ENCODE measurements at regions of chr4 and their contacts with region 1.

Region 1: GRCh38 chr4:108834835-108835384 is 72.1 kb upstream of the ETNPPL start:
- DNase-seq: no peak
- H3K4me3 ChIP-seq: no peak overlapping the region
- H3K27ac ChIP-seq: no peak overlapping the region
- H3K4me1 ChIP-seq: no peaks in the 10 kb centered on the region
- H3K27me3 ChIP-seq: no peaks in the 10 kb centered on the region
- CTCF ChIP-seq: peak; percentile 49

Region 2: DNA sequence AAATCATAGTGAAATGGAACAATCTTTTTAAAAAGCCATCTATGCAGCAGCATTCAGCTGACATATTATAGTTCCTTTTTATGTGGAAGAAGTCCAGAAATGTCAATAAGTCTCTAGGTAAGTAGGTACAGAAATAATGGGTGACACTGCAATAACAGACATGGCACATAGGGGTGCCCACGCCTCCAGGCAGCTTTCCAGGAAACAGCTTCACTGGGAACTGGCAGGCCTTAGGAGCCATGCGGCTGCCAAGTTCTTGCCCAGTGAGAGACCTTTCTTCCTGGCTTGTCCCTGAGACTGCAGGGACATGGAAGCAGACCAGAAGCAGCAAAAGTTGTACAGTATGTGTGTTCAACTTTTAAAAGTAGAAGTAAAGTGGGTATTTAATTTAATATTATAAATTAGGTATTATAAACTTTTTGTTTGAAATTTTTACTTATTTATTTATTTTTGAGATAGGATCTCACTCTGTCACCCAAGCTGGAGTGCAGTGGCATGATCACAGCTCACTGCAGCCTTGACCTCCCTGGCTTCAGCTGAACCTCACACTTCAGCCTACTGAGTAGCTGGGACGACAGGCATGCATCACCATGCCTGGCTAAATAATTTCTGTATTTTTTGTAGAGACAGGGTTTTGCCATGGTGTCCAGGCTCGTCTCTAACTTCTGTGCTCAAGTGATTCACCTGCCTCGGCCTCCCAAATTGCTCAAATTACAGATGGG is 59.9 kb before region 1 on chr4:
- intact Hi-C with region 1: no loop called
- DNase-seq: no peak
- H3K4me3 ChIP-seq: no peak overlapping the region
- H3K27ac ChIP-seq: no peak overlapping the region
- H3K4me1 ChIP-seq: no peaks in the 10 kb centered on the region
- H3K27me3 ChIP-seq: no peaks in the 10 kb centered on the region
- CTCF ChIP-seq: no peak

Region 3: DNA sequence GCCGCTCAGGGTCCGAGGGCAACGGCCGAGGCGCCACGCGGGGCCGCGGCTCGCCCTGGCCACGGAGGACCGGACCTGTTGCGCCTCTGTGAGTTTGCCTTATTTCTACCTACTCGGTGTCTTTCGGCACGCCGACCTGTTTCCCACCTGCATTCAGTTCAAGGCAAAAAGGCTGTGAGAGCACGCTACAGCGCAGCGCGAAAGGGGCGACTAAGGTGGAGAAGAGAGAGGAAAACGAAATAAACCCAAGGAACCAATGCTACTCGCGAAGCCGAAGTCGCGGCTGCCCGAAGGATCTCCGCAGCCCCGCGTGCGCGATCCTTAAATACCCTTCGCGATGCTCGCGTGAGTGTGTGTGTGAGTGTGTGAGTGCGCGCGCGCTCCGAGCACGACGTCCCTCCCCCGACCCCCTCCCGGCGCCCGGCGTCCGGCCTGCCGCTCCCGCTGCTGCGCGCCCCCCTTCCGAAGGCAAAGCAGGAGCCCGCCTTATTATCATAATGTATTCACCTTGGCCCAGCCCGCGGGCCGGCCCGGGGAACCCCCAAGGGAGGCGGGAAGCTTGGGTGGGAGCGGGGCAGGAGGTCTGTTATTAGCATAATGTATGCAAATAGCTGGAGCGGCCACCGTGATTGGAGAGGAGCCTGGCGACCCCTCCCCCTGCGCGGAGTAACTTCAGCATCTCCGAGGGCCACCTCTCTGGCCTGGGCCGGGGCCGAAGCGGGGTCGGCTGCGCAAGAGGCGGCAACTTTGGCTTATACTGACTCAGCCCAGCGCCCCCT is 467.6 kb after region 1 on chr4 and contains the start of gene COL25A1:
- intact Hi-C with region 1: loop called (anchors 10 kb)
- DNase-seq: peak; percentile 31
- H3K4me3 ChIP-seq: peak within 1 kb of the TSS; percentile 37
- H3K27ac ChIP-seq: no peak within 1 kb of the TSS
- H3K4me1 ChIP-seq: peaks cover 11% of the 10 kb centered on the region
- H3K27me3 ChIP-seq: peaks cover 32% of the 10 kb centered on the region
- CTCF ChIP-seq: no peak
- total RNA-seq, gene COL25A1: 0.29 TPM in 1 of 2 donors, not detected in the other

Region 4: DNA sequence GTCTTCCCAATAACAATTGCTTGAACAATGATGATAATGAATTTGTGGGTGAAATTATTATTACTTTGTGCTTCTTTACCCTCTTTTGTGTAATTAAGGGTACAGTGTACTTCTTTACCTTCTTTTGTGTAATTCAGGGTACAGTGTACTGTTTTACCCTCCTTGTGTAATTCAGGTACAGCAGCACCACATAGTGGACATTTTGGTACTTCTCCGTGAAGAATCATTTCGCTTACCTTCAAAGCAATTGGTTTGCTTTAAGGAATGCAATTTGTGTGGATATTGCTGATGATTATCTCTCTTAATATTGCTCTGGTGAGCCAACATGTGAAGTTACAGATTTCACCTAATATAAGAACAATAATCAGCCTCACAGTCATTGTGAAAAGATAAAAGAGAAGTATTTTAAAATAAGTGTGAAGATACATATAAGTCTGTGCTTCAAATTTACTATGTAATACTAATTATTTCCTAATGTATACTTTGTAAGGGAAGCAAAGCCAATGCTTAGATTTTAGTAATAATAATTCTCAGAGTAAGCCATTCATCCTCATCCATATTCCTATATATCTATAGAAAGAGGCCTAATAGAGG is 571.5 kb after region 1 on chr4:
- intact Hi-C with region 1: loop called (anchors 5 kb)
- DNase-seq: peak; percentile 27
- H3K4me3 ChIP-seq: no peak overlapping the region
- H3K27ac ChIP-seq: no peak overlapping the region
- H3K4me1 ChIP-seq: no peaks in the 10 kb centered on the region
- H3K27me3 ChIP-seq: no peaks in the 10 kb centered on the region
- CTCF ChIP-seq: peak; percentile 38

Measured in colonic mucosa (tissue), 4 donors.